ENCODE measurements at regions of chr6 and their contacts with region 1.

Region 1: GRCh38 chr6:27809939-27810767 is 102.0 kb downstream of the OR2B2 start:
- DNase-seq: peak; percentile 83
- ATAC-seq: peak; percentile 33
- H3K4me3 Mint-ChIP-seq: peak overlapping the region; percentile 86
- H3K27ac Mint-ChIP-seq: peak overlapping the region; percentile 95
- H3K4me1 Mint-ChIP-seq: peaks cover 49% of the 10 kb centered on the region
- H3K27me3 Mint-ChIP-seq: no peaks in the 10 kb centered on the region

Region 2: DNA sequence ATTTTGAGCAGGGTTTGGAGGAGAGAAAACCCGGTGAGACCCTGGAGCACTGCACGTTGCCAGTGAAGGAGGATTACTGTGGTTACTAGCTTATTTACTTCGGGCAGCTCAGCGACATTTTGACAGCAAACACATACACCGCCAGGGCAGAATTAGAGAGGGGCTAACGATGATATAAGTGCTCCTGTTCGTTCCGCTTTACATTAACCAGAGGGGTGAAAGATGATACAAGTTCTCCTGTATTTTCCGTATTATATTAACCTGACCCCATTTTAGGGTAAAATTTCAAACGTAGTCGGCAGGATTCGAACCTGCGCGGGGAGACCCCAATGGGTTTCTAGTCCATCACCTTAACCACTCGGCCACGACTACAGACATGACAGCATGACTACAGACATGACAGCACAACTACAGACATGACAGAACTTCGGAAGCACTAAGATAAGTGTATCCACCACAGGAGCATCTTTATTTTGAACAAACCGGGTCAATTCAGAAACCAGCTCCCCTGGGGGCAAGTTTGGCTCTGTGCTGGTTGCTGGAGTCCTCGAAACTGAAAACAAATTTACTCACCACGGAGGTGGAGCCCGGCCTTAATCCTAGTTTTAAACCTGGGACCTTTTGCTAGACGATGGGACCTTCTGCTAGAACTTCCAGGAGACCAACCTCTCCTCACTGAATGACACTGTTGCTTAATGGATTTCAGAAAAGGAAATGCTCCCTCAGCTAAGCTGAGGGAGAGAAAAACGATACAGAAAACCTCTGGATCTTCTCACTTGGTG is 256.8 kb before region 1 on chr6:
- CTCF ChIA-PET with region 1: no interaction called
- POLR2A ChIA-PET with region 1: no interaction called
- intact Hi-C with region 1: no loop called
- DNase-seq: peak; percentile 61
- ATAC-seq: peak; percentile 83
- H3K4me3 Mint-ChIP-seq: peak overlapping the region; percentile 29
- H3K27ac Mint-ChIP-seq: no peak overlapping the region
- H3K4me1 Mint-ChIP-seq: peaks cover 5% of the 10 kb centered on the region
- H3K27me3 Mint-ChIP-seq: peaks cover 58% of the 10 kb centered on the region

Region 3: DNA sequence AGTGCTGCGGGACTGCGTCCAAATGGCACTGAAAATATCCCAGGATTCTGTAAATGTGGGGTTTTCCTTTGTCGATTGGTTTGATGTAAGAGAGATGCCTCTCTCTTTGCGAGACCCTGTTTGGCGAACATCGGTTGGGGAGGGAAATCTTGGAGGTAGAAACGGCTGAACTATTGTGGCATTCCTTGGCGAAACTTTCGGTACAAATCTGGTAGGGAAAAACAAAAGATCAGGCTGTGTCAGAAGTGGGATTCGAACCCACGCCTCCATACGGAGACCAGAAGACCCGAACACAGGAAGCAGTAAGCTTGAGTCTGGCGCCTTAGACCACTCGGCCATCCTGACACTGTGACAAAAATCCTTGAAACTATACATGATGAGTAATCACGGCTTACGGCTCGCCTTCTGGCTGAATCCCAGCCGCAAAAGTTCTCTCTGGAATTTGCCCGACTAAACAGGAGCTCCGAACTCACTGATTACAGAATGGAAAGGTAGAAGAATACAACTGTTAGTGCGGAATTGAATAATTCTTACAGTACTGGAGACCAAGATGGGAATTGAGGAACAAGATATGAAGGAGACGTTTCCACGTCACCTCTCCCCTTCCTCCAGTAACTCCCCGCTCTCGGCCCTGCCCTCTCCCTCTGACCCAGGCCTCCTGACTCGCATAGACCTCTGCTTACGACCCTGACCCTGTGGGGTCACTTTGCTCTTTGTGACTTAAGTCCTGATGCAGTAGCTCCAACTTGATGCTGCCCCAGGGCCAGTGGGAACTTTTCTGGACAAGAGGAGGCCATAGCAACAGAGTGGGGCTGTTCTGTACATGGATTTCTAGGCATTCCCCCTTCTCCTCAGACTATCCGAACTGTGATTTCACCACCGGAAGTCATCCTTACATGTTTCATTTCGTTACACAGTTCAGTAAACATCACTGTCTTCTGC is 204.5 kb before region 1 on chr6:
- CTCF ChIA-PET with region 1: no interaction called
- POLR2A ChIA-PET with region 1: no interaction called
- intact Hi-C with region 1: no loop called
- DNase-seq: peak; percentile 53
- ATAC-seq: no peak
- H3K4me3 Mint-ChIP-seq: peak overlapping the region; percentile 46
- H3K27ac Mint-ChIP-seq: peak overlapping the region; percentile 14
- H3K4me1 Mint-ChIP-seq: peaks cover 23% of the 10 kb centered on the region
- H3K27me3 Mint-ChIP-seq: peaks cover 45% of the 10 kb centered on the region

Region 4: DNA sequence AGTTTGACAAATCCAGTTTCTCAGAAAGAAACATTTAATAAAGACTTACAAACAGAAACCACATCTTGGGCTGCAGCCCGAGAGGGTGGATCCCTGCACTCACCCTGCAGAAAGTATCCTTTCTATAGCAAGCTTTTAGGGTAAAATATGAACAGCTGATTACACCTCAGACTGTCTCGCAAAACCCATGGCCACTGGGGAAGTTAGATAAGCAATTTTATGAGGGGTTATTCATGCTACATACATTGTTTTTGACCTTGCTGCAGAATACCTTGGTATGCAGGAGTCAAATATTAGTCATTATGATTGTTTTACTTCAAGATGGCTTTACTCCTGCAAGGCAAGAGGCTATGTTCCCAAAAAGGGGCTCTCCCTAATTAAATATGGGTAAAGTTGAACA is 24.9 kb before region 1 on chr6:
- CTCF ChIA-PET with region 1: no interaction called
- POLR2A ChIA-PET with region 1: no interaction called
- intact Hi-C with region 1: no loop called
- DNase-seq: no peak
- ATAC-seq: no peak
- H3K4me3 Mint-ChIP-seq: no peak overlapping the region
- H3K27ac Mint-ChIP-seq: no peak overlapping the region
- H3K4me1 Mint-ChIP-seq: no peaks in the 10 kb centered on the region
- H3K27me3 Mint-ChIP-seq: peaks cover 17% of the 10 kb centered on the region

Region 5: DNA sequence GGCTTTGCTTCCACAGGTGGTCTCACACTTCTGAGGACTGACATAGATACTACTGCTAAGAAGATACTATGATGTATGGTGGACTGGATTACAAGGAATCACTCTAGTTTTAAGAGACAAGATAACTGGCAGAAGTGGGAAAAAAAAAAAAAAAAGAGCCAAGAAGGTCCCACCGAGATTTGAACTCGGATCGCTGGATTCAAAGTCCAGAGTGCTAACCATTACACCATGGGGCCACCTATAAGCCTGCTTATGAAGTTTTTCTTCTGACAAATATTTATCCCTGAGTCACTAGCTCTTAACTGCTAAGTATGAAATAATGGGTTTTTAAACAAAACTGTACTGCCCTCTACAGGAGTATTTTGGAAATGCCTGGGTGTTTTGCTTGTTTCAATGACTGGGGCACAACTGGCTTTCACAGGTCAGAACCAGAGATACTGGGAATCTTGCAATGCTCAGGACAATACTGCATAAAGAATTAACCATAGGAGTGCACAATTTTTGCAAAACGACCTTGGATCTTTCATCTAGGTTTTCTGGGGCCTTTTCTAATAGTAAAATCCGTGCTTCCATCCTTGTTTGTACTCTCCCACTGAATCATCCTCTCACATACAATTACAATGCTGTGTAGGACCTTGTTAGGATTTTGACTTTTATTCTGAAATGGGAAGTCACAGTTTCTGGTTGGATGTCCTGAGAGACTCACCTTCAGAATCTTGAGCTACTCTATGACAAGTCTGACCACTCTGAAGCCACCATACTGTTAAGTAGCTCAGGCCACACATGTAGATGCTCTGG is 14.3 kb before region 1 on chr6:
- CTCF ChIA-PET with region 1: interaction called, 11 read pairs
- POLR2A ChIA-PET with region 1: interaction called, 3 read pairs
- intact Hi-C with region 1: no loop called
- DNase-seq: peak; percentile 59
- ATAC-seq: peak; percentile 55
- H3K4me3 Mint-ChIP-seq: no peak overlapping the region
- H3K27ac Mint-ChIP-seq: peak overlapping the region; percentile 13
- H3K4me1 Mint-ChIP-seq: peaks cover 26% of the 10 kb centered on the region
- H3K27me3 Mint-ChIP-seq: peaks cover 6% of the 10 kb centered on the region

Region 6: DNA sequence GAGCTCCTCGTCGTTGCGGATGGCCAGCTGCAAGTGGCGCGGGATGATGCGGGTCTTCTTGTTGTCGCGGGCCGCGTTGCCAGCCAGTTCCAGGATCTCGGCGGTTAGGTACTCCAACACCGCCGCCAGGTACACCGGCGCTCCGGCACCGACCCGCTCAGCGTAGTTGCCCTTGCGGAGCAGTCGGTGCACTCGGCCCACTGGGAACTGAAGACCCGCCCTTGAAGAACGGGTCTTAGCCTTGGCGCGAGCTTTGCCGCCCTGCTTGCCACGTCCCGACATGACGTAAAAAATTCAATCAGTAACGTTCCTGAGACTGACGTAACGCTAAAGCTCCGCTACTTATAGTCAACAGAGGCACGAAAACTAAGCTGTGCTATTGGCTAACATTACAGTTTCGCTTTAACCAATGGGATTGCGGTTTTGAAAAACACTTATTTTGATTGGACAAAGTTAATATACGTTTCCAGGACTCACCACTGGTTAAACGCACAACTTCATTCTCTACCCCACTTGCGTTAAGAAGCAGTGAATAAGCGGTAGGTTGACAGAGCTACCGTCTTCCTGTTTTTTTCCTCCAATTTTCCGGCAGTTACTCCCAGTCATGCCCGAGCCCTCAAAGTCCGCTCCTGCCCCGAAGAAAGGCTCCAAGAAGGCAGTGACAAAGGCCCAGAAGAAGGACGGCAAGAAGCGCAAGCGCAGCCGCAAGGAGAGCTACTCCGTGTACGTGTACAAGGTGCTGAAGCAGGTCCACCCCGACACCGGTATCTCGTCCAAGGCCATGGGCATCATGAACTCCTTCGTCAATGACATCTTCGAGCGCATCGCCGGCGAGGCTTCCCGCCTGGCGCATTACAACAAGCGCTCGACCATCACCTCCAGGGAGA is 28.1 kb after region 1 on chr6:
- CTCF ChIA-PET with region 1: interaction called, 7 read pairs
- POLR2A ChIA-PET with region 1: interaction called, 106 read pairs
- intact Hi-C with region 1: loop called (anchors 1 to 2 kb)
- DNase-seq: peak; percentile 89
- ATAC-seq: peak; percentile 74
- H3K4me3 Mint-ChIP-seq: no peak overlapping the region
- H3K27ac Mint-ChIP-seq: no peak overlapping the region
- H3K4me1 Mint-ChIP-seq: peaks cover 23% of the 10 kb centered on the region
- H3K27me3 Mint-ChIP-seq: peaks cover 9% of the 10 kb centered on the region

Region 7: GRCh38 chr6:27871924-27872638 is 61.9 kb after region 1 on chr6:
- CTCF ChIA-PET with region 1: interaction called, 11 read pairs
- POLR2A ChIA-PET with region 1: interaction called, 133 read pairs
- intact Hi-C with region 1: loop called (anchors 1 kb)
- DNase-seq: peak; percentile 84
- ATAC-seq: peak; percentile 59
- H3K4me3 Mint-ChIP-seq: peak overlapping the region; percentile 81
- H3K27ac Mint-ChIP-seq: peak overlapping the region; percentile 96
- H3K4me1 Mint-ChIP-seq: peaks cover 40% of the 10 kb centered on the region
- H3K27me3 Mint-ChIP-seq: no peaks in the 10 kb centered on the region

Measured in activated CD4-positive, alpha-beta T cell treated with anti-CD3 and anti-CD28 coated beads for 36 hours (primary cell).